GM10248 (cell line): ENCODE measurements at regions of chr2 and their contacts with region 1.

Region 1: GRCh38 chr2:138718405-138718804 is 61.8 kb downstream of the NXPH2 start:
- DNase-seq: no peak
- CTCF ChIP-seq: no peak

Region 2: DNA sequence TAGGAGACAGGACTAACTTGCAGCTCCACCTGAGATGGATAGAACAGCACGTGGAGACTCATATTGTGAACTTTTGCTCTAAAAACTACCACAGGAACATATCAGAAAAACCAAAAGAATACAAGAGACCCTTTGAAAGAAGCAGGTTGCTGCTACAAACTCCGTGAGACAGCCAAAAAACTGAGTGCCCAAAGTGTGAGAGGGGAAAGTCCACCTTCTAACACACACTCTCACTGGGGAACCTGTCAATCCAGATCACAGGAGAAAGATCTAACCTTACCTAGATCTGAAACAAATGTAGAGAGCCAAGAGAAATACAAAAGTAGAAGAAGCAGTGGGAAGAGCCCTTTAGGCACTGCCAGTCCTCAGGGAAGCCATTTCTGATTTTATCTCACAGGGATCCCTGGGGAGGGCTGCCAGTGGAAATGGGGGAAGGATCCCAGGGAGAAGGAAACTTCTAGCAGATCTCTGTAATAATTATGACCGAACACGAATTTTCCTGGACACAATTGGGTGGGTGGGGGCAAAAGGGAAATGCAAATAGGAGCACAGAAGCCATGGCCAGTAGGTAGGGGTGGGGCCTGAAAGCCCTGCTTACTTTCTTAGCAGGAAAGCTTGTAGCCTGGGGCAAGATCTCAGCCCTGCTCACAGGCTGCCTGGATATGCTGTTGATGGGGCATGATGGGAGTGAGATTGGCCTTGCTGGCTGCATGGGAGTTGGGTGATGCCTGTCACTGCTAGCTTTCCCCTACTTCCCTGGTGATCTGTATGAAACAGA is 262.9 kb before region 1 on chr2:
- CTCF ChIA-PET with region 1: no interaction called
- POLR2A ChIA-PET with region 1: no interaction called
- DNase-seq: no peak
- CTCF ChIP-seq: no peak

Region 3: GRCh38 chr2:138707392-138708074 is 10.9 kb before region 1 on chr2:
- CTCF ChIA-PET with region 1: interaction called, 12 read pairs
- POLR2A ChIA-PET with region 1: no interaction called
- DNase-seq: no peak
- CTCF ChIP-seq: no peak

Region 4: DNA sequence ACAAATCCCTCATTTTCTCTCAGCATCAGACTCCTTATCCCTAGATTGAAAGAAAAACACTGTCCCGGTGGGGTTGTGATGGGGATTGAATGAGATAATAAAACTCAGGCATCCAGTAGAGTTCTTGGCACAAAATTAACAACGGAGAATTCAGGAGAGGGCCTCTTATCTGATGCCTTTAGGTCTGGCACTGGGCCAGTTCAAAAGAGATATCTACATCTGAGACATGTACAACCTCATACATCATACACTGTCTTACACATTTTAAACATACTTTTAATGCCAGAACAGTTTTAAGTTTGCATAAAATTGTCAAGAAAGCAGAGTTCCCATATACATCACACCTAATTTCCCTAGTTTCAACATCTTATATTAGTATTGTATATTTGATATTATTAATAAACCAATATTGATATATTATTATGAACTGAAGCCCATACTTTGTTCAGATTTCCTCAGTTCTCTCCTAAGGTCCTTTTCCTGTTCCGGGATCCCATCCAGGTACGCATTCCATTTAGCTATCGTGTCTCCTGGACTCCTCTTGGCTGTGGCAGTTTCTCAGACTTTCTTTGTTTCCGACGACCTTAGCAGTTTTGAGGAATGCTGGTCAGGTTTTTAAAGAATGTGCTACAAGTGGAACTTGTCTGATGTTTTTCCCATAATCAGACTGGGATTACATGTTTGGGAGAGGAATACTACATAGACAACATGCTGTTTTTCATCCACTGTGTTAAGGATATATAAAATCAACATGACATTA is 34.0 kb after region 1 on chr2:
- CTCF ChIA-PET with region 1: no interaction called
- POLR2A ChIA-PET with region 1: no interaction called
- DNase-seq: no peak
- CTCF ChIP-seq: no peak